Activated naive CD4-positive, alpha-beta T cell treated with anti-CD3 and anti-CD28 coated beads for 36 hours (primary cell): ENCODE measurements at regions of chr9 and their contacts with region 1.

Region 1: DNA sequence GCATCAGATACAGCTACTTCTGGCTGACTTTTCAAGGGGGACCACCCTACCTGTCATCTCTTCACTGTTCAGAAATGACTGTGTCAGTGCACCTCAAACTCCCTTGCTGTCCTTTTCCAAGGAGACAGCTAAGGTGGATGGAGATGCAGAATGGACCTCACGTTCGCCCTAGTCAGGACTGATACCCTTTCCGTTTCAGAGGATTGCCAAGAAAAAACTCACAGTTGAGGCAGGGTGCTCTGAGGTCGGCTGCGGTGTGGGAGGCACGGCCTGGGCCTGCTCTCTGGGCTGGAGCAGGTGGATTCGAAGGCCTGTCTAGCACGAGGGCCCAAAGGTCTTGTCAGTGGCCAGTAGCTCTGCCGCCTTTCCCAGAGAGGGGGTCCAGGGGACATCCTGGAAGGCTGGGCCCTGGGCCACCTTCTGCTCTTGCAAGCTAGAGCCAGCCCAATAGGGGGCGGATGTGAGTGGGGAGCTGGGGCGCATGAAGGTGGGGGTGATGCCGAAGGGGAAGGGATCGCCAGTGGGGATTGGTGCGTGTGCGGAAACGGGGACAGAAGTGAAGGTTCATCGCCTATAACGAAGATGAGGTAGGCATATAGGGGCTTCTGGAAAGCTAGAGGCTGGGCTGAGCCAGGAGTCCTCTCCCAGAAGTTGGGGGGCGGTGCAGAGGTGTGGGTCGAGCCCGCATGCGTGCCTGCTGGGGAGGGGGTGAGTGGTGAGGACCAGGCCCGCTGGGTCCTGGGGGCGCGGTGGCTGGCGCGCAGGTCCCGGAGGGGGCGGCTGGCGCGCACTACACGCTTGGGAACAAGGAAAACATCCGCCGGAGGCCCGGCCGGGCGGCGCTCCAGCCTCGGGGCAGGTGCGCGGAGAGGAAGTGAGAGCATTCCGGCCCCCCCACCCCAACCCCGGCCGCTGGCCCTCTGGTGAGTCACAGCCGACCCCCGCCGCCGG is 2.5 kb upstream of the MSMP start:
- DNase-seq: peak; percentile 92
- H3K4me3 Mint-ChIP-seq: peak overlapping the region; percentile 94
- H3K27ac Mint-ChIP-seq: peak overlapping the region; percentile 95
- H3K4me1 Mint-ChIP-seq: peaks cover 33% of the 10 kb centered on the region
- H3K27me3 Mint-ChIP-seq: no peaks in the 10 kb centered on the region

Region 2: GRCh38 chr9:35738186-35738585 is 18.4 kb before region 1 on chr9:
- CTCF ChIA-PET with region 1: interaction called, 32 read pairs
- intact Hi-C with region 1: no loop called
- DNase-seq: no peak
- H3K4me3 Mint-ChIP-seq: no peak overlapping the region
- H3K27ac Mint-ChIP-seq: no peak overlapping the region
- H3K4me1 Mint-ChIP-seq: peaks cover 20% of the 10 kb centered on the region
- H3K27me3 Mint-ChIP-seq: no peaks in the 10 kb centered on the region

Region 3: GRCh38 chr9:35829084-35829763 is 72.7 kb after region 1 on chr9 and contains the start of gene TMEM8B:
- CTCF ChIA-PET with region 1: interaction called, 4 read pairs
- intact Hi-C with region 1: loop called (anchors 2 kb)
- DNase-seq: peak; percentile 96
- H3K4me3 Mint-ChIP-seq: peak within 1 kb of the TSS; percentile 89
- H3K27ac Mint-ChIP-seq: peak within 1 kb of the TSS; percentile 59
- H3K4me1 Mint-ChIP-seq: peaks cover 24% of the 10 kb centered on the region
- H3K27me3 Mint-ChIP-seq: peaks cover 2% of the 10 kb centered on the region
- total RNA-seq, gene TMEM8B: 6.2 to 6.6 TPM